ENCODE measurements at regions of chr4 and their contacts with region 1.

Region 1: GRCh38 chr4:154332681-154333421 is 158.7 kb downstream of the DCHS2 start:
- DNase-seq: peak; percentile 74
- H3K4me3 ChIP-seq: peak overlapping the region; percentile 4 to 44 (median 38)
- H3K27ac ChIP-seq: peak overlapping the region in 1 of 4 donors; percentile 23
- H3K4me1 ChIP-seq: peaks cover 0 to 7% (median 5%) of the 10 kb centered on the region in 4 donors
- H3K27me3 ChIP-seq: no peaks in the 10 kb centered on the region
- CTCF ChIP-seq: peak in 1 of 4 experiments; percentile 20
- EP300 ChIP-seq: no peak
- POLR2A ChIP-seq: no peak

Region 2: GRCh38 chr4:154491341-154492271 is 158.8 kb after region 1 on chr4 and contains the start of gene DCHS2:
- intact Hi-C with region 1: no loop called
- DNase-seq: peak; percentile 78
- H3K4me3 ChIP-seq: peak within 1 kb of the TSS; percentile 46 to 57 (median 52)
- H3K27ac ChIP-seq: peak within 1 kb of the TSS in 3 of 4 donors; percentile 60 to 77 (median 76)
- H3K4me1 ChIP-seq: peaks cover 0 to 36% (median 19%) of the 10 kb centered on the region in 4 donors
- H3K27me3 ChIP-seq: peaks cover 0 to 10% (median 0%) of the 10 kb centered on the region in 3 donors
- CTCF ChIP-seq: no peak
- EP300 ChIP-seq: no peak
- POLR2A ChIP-seq: no peak
- total RNA-seq, gene DCHS2: 13.6 to 24.1 (median 17.2) TPM

Region 3: DNA sequence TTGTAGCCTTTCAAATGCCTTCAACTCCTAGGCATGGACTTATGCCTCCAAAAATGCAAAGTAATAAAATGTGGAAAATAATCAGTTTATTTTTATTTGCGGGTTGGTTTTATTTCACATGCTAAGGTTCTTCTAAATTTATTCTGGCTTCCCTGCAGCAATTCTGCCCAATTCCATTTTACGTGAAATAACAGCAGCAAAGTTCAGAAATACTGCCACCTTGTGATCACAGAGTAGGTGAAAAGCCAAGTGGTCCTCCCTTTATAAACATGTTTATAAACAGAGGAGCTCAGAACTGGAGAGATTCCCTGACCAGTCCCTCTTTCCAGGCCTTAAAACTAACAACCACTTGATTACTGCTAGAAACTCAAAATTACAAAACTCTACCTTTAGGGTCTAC is 173.4 kb after region 1 on chr4:
- intact Hi-C with region 1: loop called (anchors 5 kb)
- DNase-seq: no peak
- H3K4me3 ChIP-seq: no peak overlapping the region
- H3K27ac ChIP-seq: no peak overlapping the region
- H3K4me1 ChIP-seq: no peaks in the 10 kb centered on the region
- H3K27me3 ChIP-seq: no peaks in the 10 kb centered on the region
- CTCF ChIP-seq: peak; percentile 28 to 56 (median 46)
- EP300 ChIP-seq: no peak
- POLR2A ChIP-seq: no peak

Measured in sigmoid colon (tissue), 7 donors.